CD4-positive, alpha-beta memory T cell (primary cell): ENCODE measurements at regions of chr9 and their contacts with region 1.

Region 1: DNA sequence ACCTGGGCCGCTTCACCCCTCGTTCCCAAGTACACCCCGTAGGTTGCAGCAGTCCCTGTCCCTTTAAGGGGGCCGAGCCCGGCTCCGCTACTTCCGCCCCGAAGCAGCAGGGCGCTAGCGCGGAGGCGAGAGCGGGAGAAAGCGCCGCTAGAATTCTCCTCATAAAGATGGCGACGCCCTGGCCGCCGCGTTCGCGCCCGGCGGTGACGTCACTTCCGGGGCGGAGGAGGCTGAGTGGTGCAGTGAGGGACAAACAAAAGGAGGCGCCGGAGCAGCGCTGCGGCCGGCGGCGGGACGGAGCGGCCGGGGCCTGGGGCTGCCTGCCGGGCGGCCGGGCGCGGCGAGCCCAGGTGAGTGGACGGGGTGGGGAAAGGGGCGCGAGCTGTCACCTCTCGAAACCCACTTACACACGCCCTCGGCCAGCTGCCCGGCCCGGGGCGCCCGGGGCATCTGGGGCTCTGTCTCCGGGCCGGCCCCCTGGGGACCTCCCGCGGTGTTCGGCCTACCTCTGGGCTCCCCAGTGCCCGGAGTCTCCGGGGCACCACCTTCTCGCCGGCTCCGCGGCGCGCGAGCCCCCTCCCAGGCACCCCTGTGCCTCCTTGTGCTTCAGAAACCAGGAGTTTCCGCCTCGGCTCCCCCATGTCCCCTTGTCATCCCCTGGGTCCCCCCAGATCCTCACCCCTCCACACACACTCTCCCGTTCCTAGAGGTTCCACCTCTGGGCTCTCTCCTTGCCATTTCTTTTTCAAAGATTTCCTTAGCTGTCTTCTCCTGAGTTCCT is at the starts of genes KYAT1 and LRRC8A:
- DNase-seq: peak; percentile 96 to 99 (median 97)
- H3K4me3 ChIP-seq: peak within 1 kb of the TSS; percentile 95 to 99
- H3K4me3 Mint-ChIP-seq: peak within 1 kb of the TSS; percentile 94 to 99 (median 98)
- H3K27ac ChIP-seq: peak within 1 kb of the TSS; percentile 84
- H3K27ac Mint-ChIP-seq: peak within 1 kb of the TSS; percentile 92 to 98 (median 98)
- H3K4me1 ChIP-seq: peaks cover 43% of the 10 kb centered on the region
- H3K4me1 Mint-ChIP-seq: peaks cover 34 to 72% (median 56%) of the 10 kb centered on the region in 4 donors
- H3K27me3 ChIP-seq: no peaks in the 10 kb centered on the region
- H3K27me3 Mint-ChIP-seq: no peaks in the 10 kb centered on the region
- total RNA-seq, gene KYAT1: 9.8 to 12.4 TPM
- total RNA-seq, gene LRRC8A: 24.4 to 26.4 TPM

Region 2: GRCh38 chr9:128175102-128175563 is 707.0 kb before region 1 on chr9:
- CTCF ChIA-PET with region 1: no interaction called
- POLR2A ChIA-PET with region 1: no interaction called
- intact Hi-C with region 1: no loop called
- DNase-seq: no peak
- H3K4me3 ChIP-seq: no peak overlapping the region
- H3K4me3 Mint-ChIP-seq: no peak overlapping the region
- H3K27ac ChIP-seq: no peak overlapping the region
- H3K27ac Mint-ChIP-seq: peak overlapping the region in 1 of 7 donors; percentile 53
- H3K4me1 ChIP-seq: no peaks in the 10 kb centered on the region
- H3K4me1 Mint-ChIP-seq: no peaks in the 10 kb centered on the region
- H3K27me3 ChIP-seq: no peaks in the 10 kb centered on the region
- H3K27me3 Mint-ChIP-seq: no peaks in the 10 kb centered on the region

Region 3: DNA sequence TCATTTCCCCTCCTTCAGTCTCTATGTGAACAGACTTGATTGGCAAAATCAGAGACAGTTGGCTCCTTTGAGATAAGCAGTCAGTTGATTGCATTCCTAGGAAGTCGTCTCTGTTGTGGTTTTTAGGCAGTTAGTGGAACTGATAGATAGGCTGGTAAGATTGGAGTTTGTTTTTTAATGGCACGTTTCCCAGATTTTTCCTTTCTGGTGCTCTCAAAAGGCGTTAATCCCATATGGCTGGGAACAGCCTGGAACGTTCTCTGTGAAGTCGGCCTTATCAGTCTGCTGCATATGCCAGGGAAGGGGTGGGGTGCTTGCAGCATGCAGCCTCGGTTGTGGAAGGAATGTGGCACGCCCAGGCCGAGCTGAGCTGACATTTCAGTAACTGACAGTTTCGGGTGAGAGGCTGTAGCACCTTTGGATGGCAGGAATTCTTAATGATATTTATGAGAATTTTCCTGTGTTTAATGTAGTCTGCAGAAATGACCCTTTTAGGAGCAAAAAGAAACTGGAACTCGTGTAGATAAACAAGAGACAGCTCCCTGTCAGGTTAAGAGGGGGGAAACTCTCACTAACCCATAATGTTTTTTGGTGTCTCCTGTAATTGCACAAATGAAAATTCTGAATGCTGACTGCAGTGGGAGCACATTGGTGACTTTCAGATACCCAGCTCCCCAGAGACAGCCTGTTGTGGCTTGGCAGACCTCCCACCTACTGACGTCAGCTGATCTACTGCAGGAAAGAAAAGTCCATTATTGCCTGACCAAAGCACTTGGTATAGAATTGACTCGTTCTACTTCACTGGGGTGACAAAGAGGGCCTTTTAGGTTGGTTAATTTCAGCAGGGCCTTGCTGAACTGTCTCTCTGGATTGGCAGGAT is 323.4 kb before region 1 on chr9:
- CTCF ChIA-PET with region 1: no interaction called
- POLR2A ChIA-PET with region 1: interaction called, 3 read pairs
- intact Hi-C with region 1: loop called (anchors 5 kb)
- DNase-seq: peak in 3 of 5 donors; percentile 34 to 71 (median 39)
- H3K4me3 ChIP-seq: peak overlapping the region in 1 of 2 donors; percentile 7
- H3K4me3 Mint-ChIP-seq: peak overlapping the region; percentile 26 to 80 (median 63)
- H3K27ac ChIP-seq: peak overlapping the region; percentile 19
- H3K27ac Mint-ChIP-seq: peak overlapping the region; percentile 70 to 93 (median 81)
- H3K4me1 ChIP-seq: peaks cover 68% of the 10 kb centered on the region
- H3K4me1 Mint-ChIP-seq: peaks cover 11 to 31% (median 27%) of the 10 kb centered on the region in 4 donors
- H3K27me3 ChIP-seq: no peaks in the 10 kb centered on the region
- H3K27me3 Mint-ChIP-seq: no peaks in the 10 kb centered on the region

Region 4: GRCh38 chr9:128863647-128864046 is 18.4 kb before region 1 on chr9:
- CTCF ChIA-PET with region 1: interaction called, 35 read pairs
- POLR2A ChIA-PET with region 1: no interaction called
- intact Hi-C with region 1: loop called (anchors 2 kb)
- DNase-seq: peak; percentile 76 to 81 (median 78)
- H3K4me3 ChIP-seq: no peak overlapping the region
- H3K4me3 Mint-ChIP-seq: no peak overlapping the region
- H3K27ac ChIP-seq: no peak overlapping the region
- H3K27ac Mint-ChIP-seq: peak overlapping the region in 2 of 7 donors; percentile 59 to 63
- H3K4me1 ChIP-seq: peaks cover 9% of the 10 kb centered on the region
- H3K4me1 Mint-ChIP-seq: peaks cover 3 to 6% (median 5%) of the 10 kb centered on the region in 4 donors
- H3K27me3 ChIP-seq: no peaks in the 10 kb centered on the region
- H3K27me3 Mint-ChIP-seq: no peaks in the 10 kb centered on the region

Region 5: DNA sequence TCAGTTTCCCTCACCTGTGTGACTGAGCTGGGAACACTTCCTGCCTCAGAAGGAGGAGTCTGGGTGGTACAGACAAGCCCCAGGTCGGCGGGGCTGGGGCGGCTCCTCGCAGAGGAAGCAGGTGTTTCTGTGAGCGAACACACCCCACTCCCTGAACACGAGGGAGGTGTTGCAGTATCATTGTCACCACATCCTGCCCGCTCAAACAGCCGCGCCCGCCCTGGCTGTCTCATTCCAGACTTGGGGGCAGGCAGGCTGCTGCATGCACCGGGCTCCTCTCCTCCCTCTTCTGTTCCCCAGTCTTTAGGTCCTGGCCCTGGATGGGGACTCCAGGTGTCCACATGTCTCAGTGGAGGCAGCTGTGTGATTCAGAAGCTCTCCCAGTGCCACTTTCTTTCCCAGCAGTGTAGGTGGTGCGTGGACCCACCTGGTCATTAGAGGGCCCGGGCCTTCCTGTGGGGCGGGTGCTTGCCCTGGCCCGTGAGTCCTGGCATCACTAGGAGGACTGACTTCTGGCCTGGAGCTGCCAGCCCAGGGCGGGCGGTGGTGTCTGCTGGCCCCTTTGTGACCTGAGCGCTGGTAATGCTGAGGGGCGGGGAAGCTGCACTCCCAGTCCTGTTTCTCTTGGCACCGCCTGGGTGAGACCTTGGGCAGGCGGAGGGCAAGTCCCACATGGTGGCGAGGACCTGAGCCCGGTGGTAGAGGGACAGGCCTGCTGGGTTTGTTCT is 20.4 kb after region 1 on chr9:
- CTCF ChIA-PET with region 1: interaction called, 7 read pairs
- POLR2A ChIA-PET with region 1: interaction called, 110 read pairs
- intact Hi-C with region 1: loop called (anchors 1 kb)
- DNase-seq: peak; percentile 85 to 92 (median 88)
- H3K4me3 ChIP-seq: peak overlapping the region; percentile 14 to 45
- H3K4me3 Mint-ChIP-seq: peak overlapping the region; percentile 76 to 87 (median 84)
- H3K27ac ChIP-seq: peak overlapping the region; percentile 76
- H3K27ac Mint-ChIP-seq: peak overlapping the region; percentile 84 to 99 (median 98)
- H3K4me1 ChIP-seq: peaks cover 87% of the 10 kb centered on the region
- H3K4me1 Mint-ChIP-seq: peaks cover 35 to 83% (median 65%) of the 10 kb centered on the region in 4 donors
- H3K27me3 ChIP-seq: no peaks in the 10 kb centered on the region
- H3K27me3 Mint-ChIP-seq: no peaks in the 10 kb centered on the region

Region 6: GRCh38 chr9:128921881-128922763 is 40.0 kb after region 1 on chr9:
- CTCF ChIA-PET with region 1: interaction called, 100 read pairs
- POLR2A ChIA-PET with region 1: interaction called, 10 read pairs
- intact Hi-C with region 1: no loop called
- DNase-seq: no peak
- H3K4me3 ChIP-seq: no peak overlapping the region
- H3K4me3 Mint-ChIP-seq: peak overlapping the region in 1 of 8 donors; percentile 54
- H3K27ac ChIP-seq: no peak overlapping the region
- H3K27ac Mint-ChIP-seq: no peak overlapping the region
- H3K4me1 ChIP-seq: no peaks in the 10 kb centered on the region
- H3K4me1 Mint-ChIP-seq: peaks cover 3 to 14% (median 9%) of the 10 kb centered on the region in 4 donors
- H3K27me3 ChIP-seq: no peaks in the 10 kb centered on the region
- H3K27me3 Mint-ChIP-seq: no peaks in the 10 kb centered on the region

Region 7: DNA sequence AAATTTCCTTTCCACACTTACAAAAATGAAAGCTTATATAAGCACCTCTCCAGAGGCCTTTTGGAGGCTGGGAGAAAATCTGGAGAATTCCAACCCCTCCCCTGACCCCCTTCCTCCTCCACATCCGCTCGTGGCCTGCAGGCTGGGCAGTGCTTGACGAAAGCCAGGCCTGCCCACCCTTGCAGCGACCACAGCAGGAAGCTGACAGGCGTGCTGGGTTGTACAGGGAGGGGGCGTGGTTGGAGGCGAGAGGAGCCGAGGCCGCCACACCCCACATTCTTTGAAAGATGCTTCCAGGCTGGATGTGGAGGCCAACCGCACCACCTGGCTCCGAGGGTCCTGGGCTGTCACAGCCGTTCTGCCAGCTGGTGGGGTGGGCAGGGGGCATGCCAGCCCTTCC is 343.7 kb after region 1 on chr9:
- CTCF ChIA-PET with region 1: no interaction called
- POLR2A ChIA-PET with region 1: no interaction called
- intact Hi-C with region 1: no loop called
- DNase-seq: peak in 4 of 5 donors; percentile 27 to 45 (median 39)
- H3K4me3 ChIP-seq: no peak overlapping the region
- H3K4me3 Mint-ChIP-seq: peak overlapping the region in 7 of 8 donors; percentile 25 to 65 (median 49)
- H3K27ac ChIP-seq: no peak overlapping the region
- H3K27ac Mint-ChIP-seq: peak overlapping the region in 6 of 7 donors; percentile 30 to 90 (median 63)
- H3K4me1 ChIP-seq: peaks cover 26% of the 10 kb centered on the region
- H3K4me1 Mint-ChIP-seq: peaks cover 12 to 39% (median 27%) of the 10 kb centered on the region in 4 donors
- H3K27me3 ChIP-seq: no peaks in the 10 kb centered on the region
- H3K27me3 Mint-ChIP-seq: no peaks in the 10 kb centered on the region